ENCODE measurements at regions of chr18 and their contacts with region 1.

Region 1: DNA sequence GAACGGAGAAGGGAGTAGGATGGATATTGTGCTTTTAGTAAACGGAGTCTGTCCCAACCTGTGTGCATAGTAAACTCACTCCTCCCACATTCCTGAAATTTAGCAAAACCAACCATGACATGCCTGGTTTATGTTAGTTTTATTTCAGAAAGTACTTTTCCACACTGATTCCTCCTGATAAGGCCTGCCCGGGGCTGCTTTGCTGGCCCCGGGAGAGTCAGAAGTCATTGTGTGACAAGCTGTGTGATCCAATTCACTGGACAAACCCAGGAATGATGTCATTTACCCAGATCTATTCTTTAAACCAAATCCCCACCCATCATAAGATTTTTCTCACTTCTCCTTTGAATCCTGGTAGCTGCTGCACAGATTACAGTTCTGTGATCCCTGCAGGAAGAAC is 109.0 kb downstream of the SETBP1 start:
- DNase-seq: no peak
- ATAC-seq: no peak
- H3K4me3 ChIP-seq: no peak overlapping the region
- H3K27ac ChIP-seq: no peak overlapping the region
- H3K4me1 ChIP-seq: peaks cover 3% of the 10 kb centered on the region; the same call in 1 of the 2 replicates
- H3K27me3 ChIP-seq: no peaks in the 10 kb centered on the region
- CTCF ChIP-seq: no peak
- POLR2A ChIP-seq: no peak
- RAD21 ChIP-seq: no peak

Region 2: DNA sequence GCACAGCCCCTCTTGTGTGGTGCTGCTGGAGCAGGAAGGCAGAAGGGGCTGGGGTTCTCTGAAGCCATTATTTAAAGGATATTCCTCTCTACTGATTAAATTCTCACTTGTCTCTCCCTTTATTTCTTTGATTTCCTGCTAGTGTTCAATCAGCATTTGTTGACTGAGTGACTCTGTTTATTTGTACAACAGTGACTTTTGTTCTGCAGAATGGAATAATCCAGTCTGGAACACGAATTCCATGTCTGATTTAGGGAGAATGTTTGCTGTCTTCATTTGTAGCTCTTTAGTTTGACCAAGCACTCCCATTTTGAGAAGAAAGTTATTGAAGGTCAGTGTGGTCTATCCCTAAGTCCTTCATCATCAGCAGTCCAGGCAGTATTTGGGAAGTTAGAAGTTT is 32.2 kb after region 1 on chr18:
- CTCF ChIA-PET with region 1: no interaction called
- POLR2A ChIA-PET with region 1: no interaction called
- dilution Hi-C with region 1: no loop called
- in situ Hi-C with region 1: no loop called
- intact Hi-C with region 1: loop called (anchors 1 kb)
- DNase-seq: no peak
- ATAC-seq: no peak
- H3K4me3 ChIP-seq: no peak overlapping the region
- H3K27ac ChIP-seq: no peak overlapping the region
- H3K4me1 ChIP-seq: peaks cover 2% of the 10 kb centered on the region; the same call in 1 of the 2 replicates
- H3K27me3 ChIP-seq: peaks cover 1% of the 10 kb centered on the region; the same call in 1 of the 2 replicates
- CTCF ChIP-seq: no peak
- POLR2A ChIP-seq: no peak
- RAD21 ChIP-seq: no peak